ENCODE measurements at regions of chr5 and their contacts with region 1.

Region 1: GRCh38 chr5:88140856-88141752 is 127.5 kb downstream of the TMEM161B start:
- DNase-seq: peak; percentile 54
- H3K4me3 ChIP-seq: no peak overlapping the region
- H3K27ac ChIP-seq: no peak overlapping the region
- H3K4me1 ChIP-seq: peaks cover 5% of the 10 kb centered on the region
- CTCF ChIP-seq: peak; percentile 53

Region 2: DNA sequence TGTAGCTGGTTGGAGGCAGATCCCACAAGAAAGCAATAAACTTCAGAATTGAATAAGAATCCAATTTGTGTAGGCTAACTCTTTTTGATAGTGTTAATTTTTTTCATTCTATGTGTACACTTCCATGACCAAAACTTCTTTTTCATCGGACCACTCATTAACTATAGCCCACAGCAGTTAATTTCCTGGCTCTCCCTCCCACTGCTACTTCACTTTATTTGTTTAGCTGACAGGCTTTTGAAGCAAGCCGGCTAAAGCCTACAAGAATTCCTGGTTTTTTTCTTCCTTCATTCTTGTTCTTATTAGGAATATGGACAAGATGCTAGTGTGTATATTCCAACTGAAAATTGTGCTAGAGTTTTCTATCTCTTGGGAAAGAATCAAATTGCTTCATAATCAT is 399.2 kb before region 1 on chr5:
- CTCF ChIA-PET with region 1: no interaction called
- POLR2A ChIA-PET with region 1: no interaction called
- intact Hi-C with region 1: no loop called
- DNase-seq: no peak
- H3K4me3 ChIP-seq: no peak overlapping the region
- H3K27ac ChIP-seq: no peak overlapping the region
- H3K4me1 ChIP-seq: no peaks in the 10 kb centered on the region
- CTCF ChIP-seq: no peak

Region 3: DNA sequence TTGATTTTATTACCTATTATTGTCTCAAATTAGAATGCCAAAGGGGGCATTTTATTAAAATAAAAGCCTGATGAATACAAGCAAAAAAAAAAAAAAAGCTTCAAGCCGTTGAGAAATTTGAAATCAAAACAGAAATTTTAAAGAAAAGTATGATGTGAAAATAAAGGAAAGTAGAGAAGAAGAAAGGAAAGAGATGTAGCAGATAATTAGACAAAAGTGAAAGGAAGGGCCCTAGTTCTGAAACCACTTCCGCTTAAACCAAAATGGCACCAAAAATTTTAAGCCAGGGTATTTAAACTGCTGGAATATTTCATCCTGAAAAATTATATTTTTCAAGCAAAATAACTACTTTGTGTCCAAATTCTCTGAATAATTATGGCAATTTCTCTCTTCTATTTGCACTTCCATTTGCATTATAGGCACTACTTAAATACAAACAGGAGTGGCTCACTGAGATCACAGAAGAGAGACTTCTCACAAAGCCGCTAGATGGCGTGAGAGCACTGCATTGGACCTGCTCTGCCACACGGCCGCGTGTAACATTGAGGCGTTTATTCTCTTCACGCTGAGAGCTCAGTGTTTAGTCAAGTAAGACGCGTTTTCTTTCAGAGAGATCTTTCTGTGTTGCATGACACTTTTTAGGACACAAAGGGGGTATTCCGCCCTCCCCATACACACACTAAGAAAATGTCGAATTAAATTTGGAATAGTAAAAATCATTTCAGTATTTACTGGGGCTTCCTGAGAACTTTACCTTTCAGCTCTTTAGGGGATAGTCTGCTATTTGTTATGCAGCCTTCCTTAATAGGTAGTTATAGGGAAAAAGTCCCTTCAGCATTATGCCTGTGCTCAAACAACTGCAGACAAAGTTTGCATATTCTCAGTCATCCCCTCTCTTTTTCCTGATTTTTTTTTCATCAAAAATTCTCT is 360.0 kb before region 1 on chr5:
- CTCF ChIA-PET with region 1: no interaction called
- POLR2A ChIA-PET with region 1: no interaction called
- intact Hi-C with region 1: loop called (anchors 10 kb)
- DNase-seq: peak; percentile 83
- H3K4me3 ChIP-seq: no peak overlapping the region
- H3K27ac ChIP-seq: no peak overlapping the region
- H3K4me1 ChIP-seq: no peaks in the 10 kb centered on the region
- CTCF ChIP-seq: peak; percentile 95

Region 4: DNA sequence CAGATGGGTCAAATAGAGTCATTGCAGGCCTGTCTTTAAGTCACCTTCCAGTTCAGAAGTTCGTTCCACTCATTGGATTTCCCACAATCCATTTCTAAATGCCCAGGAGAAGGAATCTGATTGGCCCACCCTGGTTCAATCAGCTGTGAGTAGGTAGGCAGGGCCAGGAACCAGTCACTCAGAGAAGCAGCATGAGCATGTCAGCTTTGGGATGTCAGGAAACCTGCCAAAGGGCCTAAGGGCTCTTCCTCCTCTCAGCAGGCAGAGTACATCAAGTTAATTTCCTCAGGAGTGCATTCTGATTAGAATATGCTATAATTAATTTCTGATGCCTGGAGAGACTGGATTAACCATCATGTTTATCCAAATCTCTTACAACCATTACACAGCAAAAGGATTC is 315.5 kb before region 1 on chr5:
- CTCF ChIA-PET with region 1: no interaction called
- POLR2A ChIA-PET with region 1: no interaction called
- intact Hi-C with region 1: no loop called
- DNase-seq: no peak
- H3K4me3 ChIP-seq: no peak overlapping the region
- H3K27ac ChIP-seq: no peak overlapping the region
- H3K4me1 ChIP-seq: no peaks in the 10 kb centered on the region
- CTCF ChIP-seq: no peak

Region 5: GRCh38 chr5:88594441-88594840 is 453.3 kb after region 1 on chr5:
- CTCF ChIA-PET with region 1: no interaction called
- POLR2A ChIA-PET with region 1: no interaction called
- intact Hi-C with region 1: loop called (anchors 10 kb)
- DNase-seq: no peak
- H3K4me3 ChIP-seq: no peak overlapping the region
- H3K27ac ChIP-seq: no peak overlapping the region
- H3K4me1 ChIP-seq: no peaks in the 10 kb centered on the region
- CTCF ChIP-seq: no peak

Region 6: GRCh38 chr5:88690409-88691229 is 549.5 kb after region 1 on chr5:
- CTCF ChIA-PET with region 1: no interaction called
- POLR2A ChIA-PET with region 1: interaction called, 3 read pairs
- intact Hi-C with region 1: loop called (anchors 1 kb)
- DNase-seq: peak; percentile 72
- H3K4me3 ChIP-seq: no peak overlapping the region
- H3K27ac ChIP-seq: no peak overlapping the region
- H3K4me1 ChIP-seq: no peaks in the 10 kb centered on the region
- CTCF ChIP-seq: peak; percentile 94